Astrocyte of the cerebellum (primary cell): ENCODE measurements at regions of chr14 and their contacts with region 1.

Region 1: DNA sequence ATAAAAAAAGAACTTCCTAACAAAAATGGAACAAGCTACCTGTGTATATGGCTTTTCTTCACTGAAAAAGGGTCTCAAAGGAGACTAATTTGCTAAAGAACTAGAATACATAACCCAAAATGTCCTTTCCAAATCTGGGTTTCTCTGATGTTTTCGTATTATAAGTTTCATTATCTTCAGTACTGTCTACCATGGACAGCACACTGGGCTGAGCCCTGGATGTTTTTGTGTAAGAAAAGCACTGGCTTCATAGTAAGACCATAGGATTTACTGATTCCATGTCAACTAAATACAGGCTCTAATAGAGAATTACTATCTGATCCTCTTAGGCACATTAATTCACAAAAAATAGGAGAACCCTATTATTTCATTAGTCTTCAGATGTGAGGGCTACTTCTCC is 94.3 kb upstream of the GPHB5 start:
- DNase-seq: no peak
- H3K4me3 ChIP-seq: no peak overlapping the region
- CTCF ChIP-seq: no peak

Region 2: GRCh38 chr14:63192085-63192484 is 220.9 kb before region 1 on chr14:
- in situ Hi-C with region 1: no loop called
- DNase-seq: no peak
- H3K4me3 ChIP-seq: no peak overlapping the region
- CTCF ChIP-seq: no peak

Region 3: GRCh38 chr14:63375771-63376170 is 37.2 kb before region 1 on chr14:
- in situ Hi-C with region 1: no loop called
- DNase-seq: peak; percentile 6
- H3K4me3 ChIP-seq: no peak overlapping the region
- CTCF ChIP-seq: no peak

Region 4: DNA sequence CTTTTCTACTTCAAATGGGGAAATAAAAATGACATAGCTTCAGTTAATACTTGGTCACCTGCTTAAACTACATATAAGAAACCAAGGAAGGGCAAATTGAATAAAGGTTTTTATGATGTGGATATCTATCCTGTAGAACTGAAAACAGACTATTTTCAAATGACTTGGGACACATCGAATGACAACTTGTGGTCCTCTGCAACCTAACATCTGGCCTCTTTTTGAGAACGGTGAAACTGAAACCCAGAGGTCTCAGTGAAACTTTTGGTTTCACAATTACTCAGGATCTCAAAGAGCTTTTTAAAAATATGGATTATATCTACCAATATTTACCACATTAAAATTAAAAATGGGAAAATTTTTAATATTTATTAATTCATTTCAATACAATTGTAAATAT is 65.0 kb after region 1 on chr14:
- in situ Hi-C with region 1: loop called (anchors 5 kb)
- DNase-seq: no peak
- H3K4me3 ChIP-seq: no peak overlapping the region
- CTCF ChIP-seq: no peak